ENCODE measurements at regions of chr17 and their contacts with region 1.

Region 1: DNA sequence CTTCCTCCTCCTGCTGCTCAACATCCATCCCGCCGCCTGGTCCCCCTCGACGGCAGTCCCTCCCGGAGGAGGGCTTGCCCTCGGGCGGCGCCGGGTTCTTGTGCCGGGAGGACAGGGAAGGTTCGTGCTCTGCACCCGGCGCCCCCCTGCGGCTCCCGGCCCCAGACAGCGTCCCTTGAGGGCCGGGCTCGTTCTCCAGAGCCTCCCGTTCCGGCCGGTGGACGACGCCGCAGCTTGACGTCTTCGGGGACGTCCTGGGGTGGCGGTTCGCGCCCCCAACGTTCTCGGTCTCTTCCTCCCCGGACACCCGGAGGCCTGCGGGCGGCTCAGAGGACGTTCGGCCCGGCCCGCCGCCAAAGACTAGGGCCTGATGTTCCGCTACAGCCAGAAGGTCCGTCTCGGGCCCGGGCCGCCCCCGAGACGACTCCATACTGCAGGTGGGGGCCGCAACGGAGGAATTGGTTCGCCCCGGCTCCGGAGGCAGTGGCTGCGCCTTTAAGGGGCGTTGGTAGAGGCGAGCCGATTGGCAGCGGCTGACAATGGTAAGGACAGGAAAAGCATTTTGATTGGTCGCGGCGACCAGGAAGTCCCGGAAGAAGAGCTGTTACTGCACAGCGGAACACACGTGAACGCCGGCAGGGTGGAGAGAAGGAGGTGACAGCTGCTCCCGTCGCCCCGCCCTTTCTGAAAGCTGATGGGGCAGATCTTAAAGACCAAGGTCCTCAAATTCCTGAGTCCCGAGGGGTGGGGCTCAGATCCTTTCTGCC is at the start of gene BORCS6:
- DNase-seq: peak; percentile 95
- H3K4me3 Mint-ChIP-seq: no peak within 1 kb of the TSS
- H3K27ac Mint-ChIP-seq: peak within 1 kb of the TSS; percentile 86
- H3K4me1 Mint-ChIP-seq: peaks cover 11% of the 10 kb centered on the region
- H3K27me3 Mint-ChIP-seq: no peaks in the 10 kb centered on the region
- total RNA-seq, gene BORCS6: 7.8 and 8.0 TPM in 2 replicates

Region 2: GRCh38 chr17:8125157-8125946 is 64.5 kb before region 1 on chr17:
- intact Hi-C with region 1: loop called (anchors 1 kb)
- DNase-seq: peak; percentile 78
- H3K4me3 Mint-ChIP-seq: peak overlapping the region; percentile 87
- H3K27ac Mint-ChIP-seq: peak overlapping the region; percentile 78
- H3K4me1 Mint-ChIP-seq: peaks cover 47% of the 10 kb centered on the region
- H3K27me3 Mint-ChIP-seq: peaks cover 42% of the 10 kb centered on the region

Region 3: GRCh38 chr17:8151123-8151640 is 38.7 kb before region 1 on chr17:
- intact Hi-C with region 1: loop called (anchors 1 kb)
- DNase-seq: peak; percentile 89
- H3K4me3 Mint-ChIP-seq: peak overlapping the region; percentile 94
- H3K27ac Mint-ChIP-seq: peak overlapping the region; percentile 86
- H3K4me1 Mint-ChIP-seq: peaks cover 25% of the 10 kb centered on the region
- H3K27me3 Mint-ChIP-seq: no peaks in the 10 kb centered on the region

Region 4: GRCh38 chr17:8173056-8173870 is 16.6 kb before region 1 on chr17:
- intact Hi-C with region 1: loop called (anchors 1 kb)
- DNase-seq: peak; percentile 79
- H3K4me3 Mint-ChIP-seq: peak overlapping the region; percentile 86
- H3K27ac Mint-ChIP-seq: peak overlapping the region; percentile 100
- H3K4me1 Mint-ChIP-seq: peaks cover 40% of the 10 kb centered on the region
- H3K27me3 Mint-ChIP-seq: no peaks in the 10 kb centered on the region

Region 5: GRCh38 chr17:8222630-8223356 is 32.9 kb after region 1 on chr17:
- intact Hi-C with region 1: loop called (anchors 1 kb)
- DNase-seq: peak; percentile 85
- H3K4me3 Mint-ChIP-seq: peak overlapping the region; percentile 97
- H3K27ac Mint-ChIP-seq: peak overlapping the region; percentile 96
- H3K4me1 Mint-ChIP-seq: peaks cover 43% of the 10 kb centered on the region
- H3K27me3 Mint-ChIP-seq: no peaks in the 10 kb centered on the region

Region 6: GRCh38 chr17:8288336-8289102 is 98.6 kb after region 1 on chr17 and contains the start of gene RANGRF:
- intact Hi-C with region 1: loop called (anchors 5 kb)
- DNase-seq: peak; percentile 83
- H3K4me3 Mint-ChIP-seq: peak within 1 kb of the TSS; percentile 97
- H3K27ac Mint-ChIP-seq: peak within 1 kb of the TSS; percentile 92
- H3K4me1 Mint-ChIP-seq: peaks cover 51% of the 10 kb centered on the region
- H3K27me3 Mint-ChIP-seq: no peaks in the 10 kb centered on the region
- total RNA-seq, gene RANGRF: 61.4 and 64.1 TPM in 2 replicates